Naive thymus-derived CD4-positive, alpha-beta T cell (primary cell): ENCODE measurements at regions of chr1 and their contacts with region 1.

Region 1: DNA sequence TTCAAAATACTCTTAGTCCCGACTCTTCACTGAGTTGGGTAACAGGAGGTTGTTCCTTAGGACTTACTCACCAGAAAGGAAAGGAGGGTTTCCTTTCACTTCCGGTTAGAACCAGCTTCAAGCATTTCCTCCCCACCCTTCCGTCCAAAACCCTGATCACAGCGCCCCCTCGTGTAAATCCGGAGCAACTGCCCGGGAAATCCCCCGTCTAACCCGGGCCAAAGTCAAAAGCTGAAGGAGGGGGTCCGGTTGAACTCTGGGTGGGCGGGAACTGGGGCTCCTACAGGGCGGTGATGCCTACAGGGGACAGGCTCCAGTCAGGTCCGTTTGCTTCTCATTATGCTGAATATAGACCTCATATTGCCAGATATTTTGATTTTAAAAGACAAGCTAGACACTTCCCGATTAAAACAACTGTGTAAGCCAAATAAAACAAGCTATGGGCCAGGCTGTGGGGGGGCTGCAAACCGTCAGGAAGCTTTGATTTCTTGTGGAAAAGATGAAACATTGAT is 15.0 kb upstream of the MTARC2 start:
- DNase-seq: peak; percentile 53 to 74 (median 72)
- ATAC-seq: peak; percentile 96
- H3K4me3 ChIP-seq: peak overlapping the region; percentile 20
- H3K4me3 Mint-ChIP-seq: peak overlapping the region; percentile 29 to 74 (median 64)
- H3K27ac ChIP-seq: peak overlapping the region; percentile 17
- H3K27ac Mint-ChIP-seq: peak overlapping the region in 4 of 9 donors; percentile 17 to 85 (median 50)
- H3K4me1 ChIP-seq: peaks cover 4 to 14% of the 10 kb centered on the region in 2 donors
- H3K4me1 Mint-ChIP-seq: peaks cover 8 to 23% (median 18%) of the 10 kb centered on the region in 7 donors
- H3K27me3 ChIP-seq: no peaks in the 10 kb centered on the region
- H3K27me3 Mint-ChIP-seq: peaks cover 0 to 10% (median 0%) of the 10 kb centered on the region in 5 donors

Region 2: GRCh38 chr1:219990782-219991510 is 742.2 kb before region 1 on chr1:
- CTCF ChIA-PET with region 1: no interaction called
- POLR2A ChIA-PET with region 1: no interaction called
- intact Hi-C with region 1: loop called in 1 of 2 experiments (anchors 2 kb)
- DNase-seq: peak in 1 of 9 donors; percentile 3
- ATAC-seq: no peak
- H3K4me3 ChIP-seq: no peak overlapping the region
- H3K4me3 Mint-ChIP-seq: no peak overlapping the region
- H3K27ac ChIP-seq: no peak overlapping the region
- H3K27ac Mint-ChIP-seq: peak overlapping the region in 2 of 9 donors; percentile 2 to 7
- H3K4me1 ChIP-seq: no peaks in the 10 kb centered on the region
- H3K4me1 Mint-ChIP-seq: peaks cover 0 to 4% (median 0%) of the 10 kb centered on the region in 7 donors
- H3K27me3 ChIP-seq: no peaks in the 10 kb centered on the region
- H3K27me3 Mint-ChIP-seq: no peaks in the 10 kb centered on the region

Region 3: GRCh38 chr1:220189750-220190347 is 543.3 kb before region 1 on chr1:
- CTCF ChIA-PET with region 1: interaction called, 3 read pairs
- POLR2A ChIA-PET with region 1: no interaction called
- intact Hi-C with region 1: loop called (anchors 1 to 2 kb)
- DNase-seq: peak in 2 of 9 donors; percentile 10 to 13
- ATAC-seq: no peak
- H3K4me3 ChIP-seq: no peak overlapping the region
- H3K4me3 Mint-ChIP-seq: no peak overlapping the region
- H3K27ac ChIP-seq: no peak overlapping the region
- H3K27ac Mint-ChIP-seq: peak overlapping the region in 1 of 9 donors; percentile 51
- H3K4me1 ChIP-seq: no peaks in the 10 kb centered on the region
- H3K4me1 Mint-ChIP-seq: no peaks in the 10 kb centered on the region
- H3K27me3 ChIP-seq: no peaks in the 10 kb centered on the region
- H3K27me3 Mint-ChIP-seq: no peaks in the 10 kb centered on the region

Region 4: DNA sequence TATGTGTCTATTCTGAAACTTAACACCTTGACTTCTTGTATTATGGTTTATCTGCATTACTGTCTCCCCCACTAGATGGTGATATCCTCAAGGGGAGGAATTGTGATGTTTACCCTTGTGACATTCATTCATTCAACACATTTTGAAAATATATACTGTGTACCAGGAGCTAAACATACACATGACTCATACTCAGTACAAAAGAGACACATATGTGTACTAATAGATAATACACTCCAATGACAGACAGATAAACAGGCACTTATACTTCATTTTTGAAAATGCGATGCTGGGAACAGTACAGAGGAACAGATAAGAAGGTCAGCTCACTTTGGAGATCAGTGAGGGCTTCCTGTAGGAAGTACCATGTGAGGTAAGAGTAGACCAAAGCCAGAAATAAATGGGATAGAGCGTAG is 452.0 kb before region 1 on chr1:
- CTCF ChIA-PET with region 1: no interaction called
- POLR2A ChIA-PET with region 1: no interaction called
- intact Hi-C with region 1: loop called in 1 of 2 experiments (anchors 5 kb)
- DNase-seq: no peak
- ATAC-seq: no peak
- H3K4me3 ChIP-seq: no peak overlapping the region
- H3K4me3 Mint-ChIP-seq: no peak overlapping the region
- H3K27ac ChIP-seq: no peak overlapping the region
- H3K27ac Mint-ChIP-seq: no peak overlapping the region
- H3K4me1 ChIP-seq: no peaks in the 10 kb centered on the region
- H3K4me1 Mint-ChIP-seq: no peaks in the 10 kb centered on the region
- H3K27me3 ChIP-seq: no peaks in the 10 kb centered on the region
- H3K27me3 Mint-ChIP-seq: peaks cover 0 to 16% (median 9%) of the 10 kb centered on the region in 5 donors

Region 5: DNA sequence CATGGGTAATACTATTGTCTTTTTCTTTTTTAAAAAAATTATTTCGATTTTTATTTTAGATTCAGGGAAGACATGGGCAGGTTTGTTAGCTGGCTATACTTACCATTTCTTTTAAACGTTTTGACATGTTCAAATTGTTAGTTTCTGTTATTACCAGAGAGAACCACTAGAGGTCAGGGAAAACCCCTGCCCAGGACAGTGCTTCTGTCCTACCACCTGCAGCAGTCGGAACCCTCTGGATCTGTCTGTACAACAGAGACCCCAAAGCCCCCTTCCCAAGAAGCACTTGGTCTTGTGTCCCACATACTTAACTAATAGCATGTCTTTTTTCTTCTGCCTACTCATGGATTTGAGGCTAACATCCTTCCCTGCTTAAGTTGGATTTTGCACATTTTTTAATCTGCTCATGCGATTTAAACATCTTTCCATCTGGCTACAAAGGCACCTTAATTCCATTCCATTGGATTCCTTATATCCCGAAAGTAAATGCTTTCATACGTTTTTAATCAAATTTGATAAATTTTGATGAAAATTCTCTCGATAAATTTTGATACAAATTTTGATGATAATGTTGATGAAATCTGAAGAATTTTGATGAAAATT is 53.0 kb before region 1 on chr1:
- CTCF ChIA-PET with region 1: interaction called, 11 read pairs
- POLR2A ChIA-PET with region 1: no interaction called
- intact Hi-C with region 1: loop called (anchors 1 kb)
- DNase-seq: peak in 4 of 9 donors; percentile 16 to 32 (median 26)
- ATAC-seq: peak; percentile 81
- H3K4me3 ChIP-seq: no peak overlapping the region
- H3K4me3 Mint-ChIP-seq: no peak overlapping the region
- H3K27ac ChIP-seq: no peak overlapping the region
- H3K27ac Mint-ChIP-seq: no peak overlapping the region
- H3K4me1 ChIP-seq: peaks cover 0 to 3% of the 10 kb centered on the region in 2 donors
- H3K4me1 Mint-ChIP-seq: peaks cover 0 to 5% (median 2%) of the 10 kb centered on the region in 7 donors
- H3K27me3 ChIP-seq: no peaks in the 10 kb centered on the region
- H3K27me3 Mint-ChIP-seq: peaks cover 0 to 6% (median 1%) of the 10 kb centered on the region in 5 donors